ENCODE measurements at regions of chr1 and their contacts with region 1.

Region 1: DNA sequence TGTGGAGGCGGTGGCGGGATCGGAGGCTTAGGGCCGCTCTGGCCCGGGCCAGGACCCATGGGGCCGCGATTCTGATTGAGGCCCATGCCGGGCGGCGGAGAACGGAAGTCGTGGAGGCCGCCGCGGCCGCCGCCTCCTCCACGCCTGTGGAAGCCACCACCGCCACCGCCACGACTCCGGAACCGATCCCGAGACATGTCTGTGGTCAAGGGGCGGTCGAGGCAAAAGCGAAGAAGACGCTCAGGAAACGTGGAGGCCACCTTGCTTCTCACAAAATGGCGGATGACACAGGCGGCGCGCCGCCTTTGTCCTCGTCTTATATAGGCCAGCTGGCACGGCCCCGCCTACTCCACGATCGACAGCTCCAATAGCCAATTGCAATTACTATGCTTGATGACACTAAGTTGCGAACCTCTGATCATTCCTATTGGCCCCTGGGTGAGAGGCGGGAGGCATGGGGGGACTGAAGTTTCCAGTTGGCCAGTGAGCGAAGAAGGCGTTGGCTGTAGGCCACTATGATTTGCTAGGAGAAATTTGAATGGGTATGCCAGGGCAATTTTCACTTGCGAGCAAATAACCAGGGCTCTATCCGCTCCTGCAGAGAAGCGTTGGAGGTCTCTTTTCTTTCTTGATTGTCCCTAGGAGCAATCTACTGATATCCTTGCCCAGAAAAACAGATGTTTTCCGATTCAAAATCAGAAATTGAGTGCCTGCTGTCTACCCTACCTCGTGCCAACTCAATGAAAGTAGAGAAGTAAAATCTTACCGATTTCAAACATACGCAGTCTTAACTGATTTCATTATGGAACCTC is at the start of gene SFPQ:
- DNase-seq: peak; percentile 98 to 100 (median 99)
- ATAC-seq: peak; percentile 94
- H3K4me3 ChIP-seq: peak within 1 kb of the TSS; percentile 99
- H3K27ac ChIP-seq: peak within 1 kb of the TSS; percentile 96
- H3K4me1 ChIP-seq: peaks cover 10 to 18% of the 10 kb centered on the region in 2 experiments; a peak in 4 of 5 replicates
- H3K27me3 ChIP-seq: no peaks in the 10 kb centered on the region
- CTCF ChIP-seq: 0 out of 6 replicates have a peak, but pooled peaks of 1 of the 3 experiments have one; percentile 1
- EP300 ChIP-seq: no peak
- POLR2A ChIP-seq: peak; percentile 100
- RAD21 ChIP-seq: no peak
- polyA plus RNA-seq, gene SFPQ: 69.7 to 73.4 TPM

Region 2: DNA sequence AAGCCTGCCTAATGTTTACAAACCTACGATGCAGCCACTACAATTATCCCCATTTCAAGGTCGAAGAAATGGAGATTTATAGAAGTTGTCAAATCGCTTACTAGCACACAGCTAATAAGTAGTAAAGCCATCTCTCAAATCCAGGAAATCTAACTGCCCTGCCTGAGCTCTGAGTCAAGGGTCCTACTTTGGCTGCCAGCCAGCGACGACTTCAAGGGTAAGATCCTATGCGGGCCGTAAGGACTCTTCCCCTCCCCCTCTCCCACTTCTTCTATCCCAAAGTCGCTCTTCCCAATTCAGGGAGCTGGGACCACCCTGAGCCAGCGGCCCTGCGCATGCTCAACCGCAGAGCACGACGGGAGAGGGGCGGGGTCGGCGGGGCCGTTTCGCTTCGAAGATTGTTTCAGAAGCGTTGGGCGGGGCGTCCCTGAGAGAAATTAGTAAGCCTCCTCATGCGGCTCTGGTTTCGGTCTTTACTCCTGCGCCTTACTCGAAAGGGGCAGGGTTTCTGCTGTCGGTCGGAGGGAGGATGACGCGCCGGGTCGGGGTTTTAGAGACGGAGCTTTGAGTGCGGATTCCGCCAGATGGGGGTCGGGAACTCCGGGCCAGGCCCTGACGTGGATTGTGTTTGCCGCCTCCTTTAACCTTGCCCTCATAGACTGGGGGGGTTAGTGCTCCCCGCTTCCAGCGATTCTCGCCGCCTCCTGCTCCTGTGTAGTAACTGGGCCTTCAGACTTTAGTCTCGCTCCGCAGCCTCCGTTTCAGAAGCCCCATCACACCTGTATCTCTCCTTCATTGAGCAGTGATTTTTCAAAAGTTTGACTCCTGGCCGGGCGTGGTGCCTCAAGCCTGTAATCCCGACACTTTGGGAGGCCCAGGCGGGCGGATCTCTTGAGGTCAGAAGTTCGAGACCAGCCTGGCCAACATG is 113.8 kb before region 1 on chr1 and contains the start of gene ZMYM1:
- CTCF ChIA-PET with region 1: interaction called, 10 read pairs
- POLR2A ChIA-PET with region 1: interaction called, 7 read pairs
- in situ Hi-C with region 1: no loop called
- intact Hi-C with region 1: no loop called
- DNase-seq: peak; percentile 88 to 92 (median 92)
- ATAC-seq: peak; percentile 96
- H3K4me3 ChIP-seq: peak within 1 kb of the TSS; percentile 68
- H3K27ac ChIP-seq: peak within 1 kb of the TSS; percentile 86
- H3K4me1 ChIP-seq: peaks cover 12 to 15% of the 10 kb centered on the region in 2 experiments; a peak in 4 of 5 replicates
- H3K27me3 ChIP-seq: no peaks in the 10 kb centered on the region
- CTCF ChIP-seq: 0 out of 6 replicates have a peak, but pooled peaks of 1 of the 3 experiments have one; percentile 0
- EP300 ChIP-seq: peak; percentile 41; the same call in 1 of the 2 replicates
- POLR2A ChIP-seq: peak; percentile 90
- RAD21 ChIP-seq: no peak; a peak in 1 of 4 replicates
- polyA plus RNA-seq, gene ZMYM1: 8.8 to 14.2 TPM

Region 3: DNA sequence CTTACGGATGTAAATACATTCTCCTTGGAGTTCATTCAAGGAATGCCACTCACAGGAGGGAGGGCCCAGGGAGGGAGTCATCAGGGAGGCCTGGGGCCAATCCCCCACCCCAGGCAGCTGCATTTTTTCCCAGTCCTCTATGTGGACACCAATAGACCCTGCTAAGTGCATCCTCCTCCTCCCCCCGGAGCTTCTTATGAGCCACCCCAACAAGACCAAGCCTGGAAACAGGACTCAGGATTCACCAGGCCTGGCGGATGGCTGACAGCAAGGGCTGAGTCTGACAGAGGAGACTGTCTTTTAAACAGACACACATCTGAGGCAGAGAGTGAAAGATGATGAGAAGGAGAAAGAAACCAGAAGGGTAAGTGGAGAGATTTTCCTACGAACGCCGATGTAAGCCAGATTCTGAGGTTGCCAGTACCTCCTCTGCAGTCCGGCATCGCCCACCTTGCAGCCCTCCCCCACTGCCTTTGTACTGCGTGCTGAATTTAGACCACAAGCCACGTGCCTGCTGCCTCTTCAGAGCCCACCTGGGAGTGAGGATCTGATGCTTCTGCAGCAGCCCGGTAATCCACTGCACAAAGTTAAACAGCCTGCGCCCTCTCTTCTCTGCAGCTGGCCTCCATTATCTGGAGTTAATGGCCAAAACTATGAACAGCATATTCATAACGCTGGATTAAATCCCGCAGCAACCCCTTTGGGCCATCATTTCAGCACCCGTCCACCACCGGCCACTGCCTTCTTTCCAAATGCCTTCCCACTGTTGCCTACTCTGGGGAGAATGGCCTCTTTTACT is 17.5 kb after region 1 on chr1:
- CTCF ChIA-PET with region 1: no interaction called
- POLR2A ChIA-PET with region 1: interaction called, 11 read pairs
- in situ Hi-C with region 1: no loop called
- intact Hi-C with region 1: no loop called
- DNase-seq: no peak
- ATAC-seq: no peak; the same call in 2 of the 3 replicates
- H3K4me3 ChIP-seq: no peak overlapping the region
- H3K27ac ChIP-seq: no peak overlapping the region
- H3K4me1 ChIP-seq: no peaks in the 10 kb centered on the region
- H3K27me3 ChIP-seq: no peaks in the 10 kb centered on the region
- CTCF ChIP-seq: no peak
- EP300 ChIP-seq: no peak
- POLR2A ChIP-seq: no peak
- RAD21 ChIP-seq: no peak

Region 4: DNA sequence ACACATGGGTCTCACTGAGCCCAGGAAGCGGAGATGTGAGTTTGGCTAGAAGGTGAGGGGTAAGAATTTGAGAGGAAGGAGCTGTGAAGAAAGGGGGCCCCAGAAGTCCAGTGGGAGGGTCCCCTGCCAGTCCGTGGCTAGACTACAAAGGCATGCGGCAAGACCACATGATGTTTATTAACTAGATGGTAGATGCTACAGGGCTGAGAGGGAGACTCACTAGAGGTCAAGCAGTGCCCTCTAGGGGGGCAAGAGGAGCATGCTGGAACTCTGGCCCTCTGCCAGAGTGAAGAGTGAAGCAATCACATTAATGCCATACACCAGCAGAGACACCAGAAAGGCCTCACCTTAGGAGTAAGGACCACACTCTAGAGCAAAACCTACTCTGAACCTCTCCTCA is 351.9 kb after region 1 on chr1:
- CTCF ChIA-PET with region 1: no interaction called
- POLR2A ChIA-PET with region 1: no interaction called
- in situ Hi-C with region 1: loop called (anchors 10 kb)
- intact Hi-C with region 1: no loop called
- DNase-seq: peak; percentile 67 to 87 (median 79)
- ATAC-seq: peak; percentile 95
- H3K4me3 ChIP-seq: no peak overlapping the region
- H3K27ac ChIP-seq: no peak overlapping the region
- H3K4me1 ChIP-seq: no peaks in the 10 kb centered on the region; a peak in 1 of 5 replicates
- H3K27me3 ChIP-seq: no peaks in the 10 kb centered on the region
- CTCF ChIP-seq: peak; percentile 79 to 92 (median 84)
- EP300 ChIP-seq: no peak
- POLR2A ChIP-seq: no peak
- RAD21 ChIP-seq: peak; percentile 59 to 88

Region 5: DNA sequence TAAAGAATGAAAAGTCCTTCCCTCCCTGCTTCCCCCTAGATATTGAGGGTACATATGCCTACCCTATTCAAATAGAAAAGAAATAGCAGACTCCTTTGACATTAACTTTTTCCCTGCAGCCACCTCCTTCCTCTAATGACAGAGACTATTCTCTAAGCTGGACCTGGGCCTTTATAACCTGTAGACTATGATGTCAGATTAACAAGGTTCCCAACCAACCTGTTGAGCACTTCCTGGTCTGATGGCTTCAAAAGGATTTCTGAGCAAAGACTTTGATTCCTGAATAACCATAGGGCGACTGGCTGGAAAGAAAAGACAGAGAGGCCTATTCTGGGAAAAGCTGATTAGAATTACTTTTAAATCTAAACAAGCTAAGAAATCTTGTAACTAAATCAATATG is 544.1 kb after region 1 on chr1:
- CTCF ChIA-PET with region 1: no interaction called
- POLR2A ChIA-PET with region 1: no interaction called
- in situ Hi-C with region 1: no loop called
- intact Hi-C with region 1: no loop called
- DNase-seq: no peak
- ATAC-seq: no peak
- H3K4me3 ChIP-seq: no peak overlapping the region
- H3K27ac ChIP-seq: no peak overlapping the region
- H3K4me1 ChIP-seq: no peaks in the 10 kb centered on the region
- H3K27me3 ChIP-seq: no peaks in the 10 kb centered on the region
- CTCF ChIP-seq: no peak
- EP300 ChIP-seq: no peak
- POLR2A ChIP-seq: no peak
- RAD21 ChIP-seq: no peak

Region 6: DNA sequence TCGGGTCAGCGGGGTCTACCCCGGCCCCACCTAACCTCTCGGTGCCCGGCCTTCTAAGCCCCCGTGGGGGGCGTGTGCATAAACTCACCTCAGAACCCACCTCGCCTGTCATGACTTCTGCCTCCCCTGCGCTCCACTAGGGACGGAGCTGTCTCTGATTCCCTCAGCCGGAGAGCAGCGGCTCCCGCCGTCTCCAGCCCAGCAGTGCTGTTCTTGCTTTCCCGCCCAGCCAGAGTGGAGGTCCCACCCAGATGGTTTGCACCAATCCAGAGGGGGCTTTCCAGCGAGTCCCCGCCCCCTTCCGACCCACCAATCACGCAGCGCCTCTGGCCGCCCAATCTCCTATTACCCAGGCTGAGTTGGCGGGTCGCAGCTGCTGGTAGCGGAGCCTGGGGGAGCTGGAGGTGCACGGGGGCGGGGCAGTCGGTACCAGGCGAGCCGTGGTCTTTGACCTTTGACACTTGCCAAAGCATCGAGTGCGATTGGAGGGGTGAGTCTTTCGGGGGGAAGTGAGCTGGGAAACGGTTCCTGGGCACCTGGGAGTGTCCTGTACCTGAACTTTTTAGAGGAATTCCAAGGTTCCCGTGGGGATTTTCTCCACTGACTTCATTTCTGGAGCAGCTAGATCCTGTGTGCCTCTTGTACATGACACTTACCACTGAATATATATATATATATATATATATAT is 576.8 kb after region 1 on chr1 and contains the start of gene CLSPN:
- CTCF ChIA-PET with region 1: no interaction called
- POLR2A ChIA-PET with region 1: interaction called, 3 read pairs
- in situ Hi-C with region 1: no loop called
- intact Hi-C with region 1: loop called (anchors 10 kb)
- DNase-seq: peak; percentile 99 to 100 (median 99)
- ATAC-seq: peak; percentile 95
- H3K4me3 ChIP-seq: peak within 1 kb of the TSS; percentile 66
- H3K27ac ChIP-seq: peak within 1 kb of the TSS; percentile 89
- H3K4me1 ChIP-seq: peaks cover 2 to 28% of the 10 kb centered on the region in 2 experiments; a peak in 3 of 5 replicates
- H3K27me3 ChIP-seq: no peaks in the 10 kb centered on the region
- CTCF ChIP-seq: 0 out of 6 replicates have a peak, but pooled peaks of 1 of the 3 experiments have one; percentile 10
- EP300 ChIP-seq: no peak
- POLR2A ChIP-seq: peak; percentile 99
- RAD21 ChIP-seq: no peak
- polyA plus RNA-seq, gene CLSPN: 23.1 to 27.0 TPM

Measured in K562 (cell line).